ENCODE measurements at regions of chr6 and their contacts with region 1.

Region 1: DNA sequence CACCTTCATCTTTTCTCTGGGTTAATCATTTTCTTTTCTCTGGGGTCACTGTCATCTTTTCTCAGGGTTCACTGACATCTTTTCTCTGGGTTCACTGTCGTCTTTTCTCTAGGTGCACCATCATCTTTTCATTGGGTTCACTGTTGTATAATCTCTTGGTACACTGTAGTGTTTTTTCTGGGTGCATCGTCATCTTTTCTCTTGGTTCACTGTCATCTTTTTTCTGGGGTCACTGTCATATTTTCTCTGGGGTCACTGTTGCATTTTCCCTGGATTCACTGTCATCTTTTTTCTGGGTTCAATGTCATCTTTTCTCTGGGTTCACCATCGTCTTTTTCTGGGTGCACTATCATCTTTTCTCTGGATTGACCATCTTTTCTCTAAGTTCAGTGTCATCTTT is 143.7 kb downstream of the PLG start:
- DNase-seq: no peak
- H3K4me3 ChIP-seq: no peak overlapping the region
- H3K27ac ChIP-seq: no peak overlapping the region
- H3K4me1 ChIP-seq: no peaks in the 10 kb centered on the region
- H3K27me3 ChIP-seq: no peaks in the 10 kb centered on the region
- CTCF ChIP-seq: no peak
- POLR2A ChIP-seq: no peak

Region 2: DNA sequence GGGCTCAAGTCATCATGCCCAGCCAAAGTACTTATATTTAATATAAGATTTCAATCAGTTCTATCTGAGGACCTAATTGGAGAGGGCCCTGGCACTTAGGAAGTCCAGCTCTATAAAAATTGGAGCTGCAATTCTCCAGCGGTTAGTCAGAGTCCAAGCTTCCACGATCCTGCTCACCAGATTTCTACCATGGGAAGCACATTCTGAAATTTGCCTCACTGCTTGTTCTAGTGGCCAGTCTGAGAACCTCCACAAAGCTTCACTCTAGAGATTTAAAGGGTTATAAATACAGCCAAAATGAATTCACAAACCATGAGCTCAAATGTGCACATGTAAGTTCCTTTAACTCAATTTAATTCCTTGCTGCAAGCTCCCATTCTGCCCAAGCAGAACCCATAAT is 1012.2 kb before region 1 on chr6:
- intact Hi-C with region 1: loop called (anchors 5 kb)
- DNase-seq: no peak
- H3K4me3 ChIP-seq: no peak overlapping the region
- H3K27ac ChIP-seq: no peak overlapping the region
- H3K4me1 ChIP-seq: no peaks in the 10 kb centered on the region
- H3K27me3 ChIP-seq: peaks cover 0 to 2% of the 10 kb centered on the region in 2 donors
- CTCF ChIP-seq: no peak
- POLR2A ChIP-seq: no peak

Measured in breast epithelium (tissue), 4 donors.